ENCODE measurements at regions of chr1 and their contacts with region 1.

Region 1: GRCh38 chr1:221478050-221478949 is 263.6 kb downstream of the DUSP10 start:
- DNase-seq: peak; percentile 38 to 47 (median 45)
- H3K4me3 ChIP-seq: no peak overlapping the region
- H3K4me3 Mint-ChIP-seq: no peak overlapping the region
- H3K27ac ChIP-seq: no peak overlapping the region
- H3K27ac Mint-ChIP-seq: no peak overlapping the region
- H3K4me1 ChIP-seq: no peaks in the 10 kb centered on the region
- H3K4me1 Mint-ChIP-seq: peaks cover 0 to 2% (median under 1%) of the 10 kb centered on the region in 4 donors
- H3K27me3 ChIP-seq: no peaks in the 10 kb centered on the region
- H3K27me3 Mint-ChIP-seq: peaks cover 0 to 7% of the 10 kb centered on the region in 2 donors

Region 2: GRCh38 chr1:221497046-221497445 is 18.7 kb after region 1 on chr1:
- CTCF ChIA-PET with region 1: no interaction called
- POLR2A ChIA-PET with region 1: no interaction called
- intact Hi-C with region 1: no loop called
- DNase-seq: no peak
- H3K4me3 ChIP-seq: no peak overlapping the region
- H3K4me3 Mint-ChIP-seq: no peak overlapping the region
- H3K27ac ChIP-seq: no peak overlapping the region
- H3K27ac Mint-ChIP-seq: no peak overlapping the region
- H3K4me1 ChIP-seq: no peaks in the 10 kb centered on the region
- H3K4me1 Mint-ChIP-seq: no peaks in the 10 kb centered on the region
- H3K27me3 ChIP-seq: no peaks in the 10 kb centered on the region
- H3K27me3 Mint-ChIP-seq: peaks cover 3 to 8% of the 10 kb centered on the region in 2 donors

Region 3: GRCh38 chr1:221839796-221840395 is 361.6 kb after region 1 on chr1:
- CTCF ChIA-PET with region 1: no interaction called
- POLR2A ChIA-PET with region 1: no interaction called
- intact Hi-C with region 1: loop called (anchors 10 kb)
- DNase-seq: peak; percentile 15 to 87 (median 20)
- H3K4me3 ChIP-seq: no peak overlapping the region
- H3K4me3 Mint-ChIP-seq: peak overlapping the region in 3 of 8 donors; percentile 4 to 48 (median 27)
- H3K27ac ChIP-seq: no peak overlapping the region
- H3K27ac Mint-ChIP-seq: peak overlapping the region in 5 of 7 donors; percentile 53 to 84 (median 61)
- H3K4me1 ChIP-seq: peaks cover 18% of the 10 kb centered on the region
- H3K4me1 Mint-ChIP-seq: peaks cover 5 to 26% (median 19%) of the 10 kb centered on the region in 4 donors
- H3K27me3 ChIP-seq: no peaks in the 10 kb centered on the region
- H3K27me3 Mint-ChIP-seq: no peaks in the 10 kb centered on the region

Region 4: DNA sequence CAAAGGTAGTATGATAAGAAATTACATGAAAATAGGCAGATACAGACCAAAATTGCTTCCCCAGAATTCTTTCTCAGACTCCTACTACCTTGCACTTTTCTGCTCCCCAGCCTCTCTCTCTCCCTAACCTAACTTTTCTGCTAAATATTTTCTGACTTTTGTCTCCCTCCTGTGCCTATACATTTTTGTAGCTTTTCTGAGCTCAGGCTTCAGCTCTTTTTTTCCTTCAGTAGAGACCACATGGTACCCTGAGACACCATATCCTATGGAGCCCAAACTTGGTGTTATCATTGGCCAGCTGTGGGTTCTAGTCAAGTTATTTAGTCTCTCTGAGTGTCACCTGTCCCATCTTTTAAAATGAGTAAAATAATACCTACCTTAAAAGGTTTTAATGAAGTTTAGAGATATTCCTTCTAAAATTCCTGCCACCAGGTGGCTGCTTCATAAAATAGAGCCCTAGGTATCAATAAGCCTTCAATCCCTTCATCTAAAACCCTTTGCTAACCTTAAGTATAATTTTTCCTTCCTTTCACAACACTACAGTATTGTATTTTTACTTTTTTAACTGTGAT is 501.2 kb after region 1 on chr1:
- CTCF ChIA-PET with region 1: no interaction called
- POLR2A ChIA-PET with region 1: no interaction called
- intact Hi-C with region 1: loop called (anchors 10 kb)
- DNase-seq: no peak
- H3K4me3 ChIP-seq: no peak overlapping the region
- H3K4me3 Mint-ChIP-seq: no peak overlapping the region
- H3K27ac ChIP-seq: no peak overlapping the region
- H3K27ac Mint-ChIP-seq: no peak overlapping the region
- H3K4me1 ChIP-seq: no peaks in the 10 kb centered on the region
- H3K4me1 Mint-ChIP-seq: no peaks in the 10 kb centered on the region
- H3K27me3 ChIP-seq: no peaks in the 10 kb centered on the region
- H3K27me3 Mint-ChIP-seq: peaks cover 0 to 1% of the 10 kb centered on the region in 2 donors

Region 5: GRCh38 chr1:222009105-222009730 is 530.9 kb after region 1 on chr1:
- CTCF ChIA-PET with region 1: interaction called, 29 read pairs
- POLR2A ChIA-PET with region 1: no interaction called
- intact Hi-C with region 1: loop called (anchors 1 kb)
- DNase-seq: peak in 4 of 5 donors; percentile 17 to 26 (median 18)
- H3K4me3 ChIP-seq: no peak overlapping the region
- H3K4me3 Mint-ChIP-seq: peak overlapping the region in 2 of 8 donors; percentile 49 to 52
- H3K27ac ChIP-seq: no peak overlapping the region
- H3K27ac Mint-ChIP-seq: peak overlapping the region in 1 of 7 donors; percentile 19
- H3K4me1 ChIP-seq: no peaks in the 10 kb centered on the region
- H3K4me1 Mint-ChIP-seq: peaks cover 0 to 2% (median 0%) of the 10 kb centered on the region in 4 donors
- H3K27me3 ChIP-seq: no peaks in the 10 kb centered on the region
- H3K27me3 Mint-ChIP-seq: peaks cover 0 to 2% of the 10 kb centered on the region in 2 donors

Region 6: DNA sequence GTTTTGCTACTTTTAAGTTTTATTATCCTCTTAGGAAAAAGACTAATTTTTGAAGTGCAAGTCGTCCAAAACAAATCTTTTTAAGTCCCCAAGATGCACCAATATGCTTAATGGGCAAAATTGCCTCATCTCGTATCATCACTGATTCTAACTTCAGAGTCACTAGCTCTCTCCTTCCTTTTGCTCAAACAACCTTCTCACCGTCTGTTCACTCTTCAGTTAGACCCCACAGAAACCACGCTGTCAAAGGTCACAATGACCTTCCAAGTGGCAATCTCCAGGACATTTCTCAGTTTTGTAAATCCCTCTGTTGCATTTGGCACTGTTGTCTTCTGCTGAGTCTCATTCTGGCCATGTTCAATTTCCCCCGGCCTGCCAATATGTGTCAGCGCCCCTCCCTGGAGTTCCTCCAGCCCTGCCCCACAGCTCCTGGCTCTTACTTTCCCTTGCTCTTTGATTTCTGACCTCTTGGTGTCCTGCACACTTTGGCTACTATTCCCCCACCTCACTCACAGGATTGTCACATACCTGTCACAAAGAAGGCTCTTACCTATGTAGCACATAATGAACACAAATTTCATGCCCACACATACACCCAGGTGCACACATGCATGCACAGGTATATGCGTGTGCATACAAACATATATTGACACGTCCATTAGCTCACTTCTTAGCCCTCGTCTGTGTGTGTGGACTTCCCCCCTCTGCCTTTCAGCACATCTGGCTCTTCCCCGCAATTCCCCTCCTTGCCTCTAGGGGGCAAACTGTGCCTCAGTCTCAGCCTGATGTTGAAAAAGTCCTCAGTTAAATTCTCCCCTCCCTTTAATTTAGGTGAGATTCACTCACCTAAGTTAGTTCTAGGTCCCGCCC is 617.5 kb after region 1 on chr1:
- CTCF ChIA-PET with region 1: interaction called, 5 read pairs
- POLR2A ChIA-PET with region 1: no interaction called
- intact Hi-C with region 1: loop called (anchors 2 kb)
- DNase-seq: peak; percentile 53 to 69 (median 61)
- H3K4me3 ChIP-seq: no peak overlapping the region
- H3K4me3 Mint-ChIP-seq: no peak overlapping the region
- H3K27ac ChIP-seq: no peak overlapping the region
- H3K27ac Mint-ChIP-seq: no peak overlapping the region
- H3K4me1 ChIP-seq: no peaks in the 10 kb centered on the region
- H3K4me1 Mint-ChIP-seq: no peaks in the 10 kb centered on the region
- H3K27me3 ChIP-seq: no peaks in the 10 kb centered on the region
- H3K27me3 Mint-ChIP-seq: no peaks in the 10 kb centered on the region